Right ventricle myocardium inferior (tissue), 1 donor: ENCODE measurements at regions of chr14 and their contacts with region 1.

Region 1: GRCh38 chr14:37874429-37875191 is 279.2 kb downstream of the TTC6 start:
- DNase-seq: peak; percentile 88
- ATAC-seq: peak; percentile 80

Region 2: GRCh38 chr14:37246427-37246914 is 628.1 kb before region 1 on chr14:
- intact Hi-C with region 1: loop called (anchors 2 kb)
- DNase-seq: no peak
- ATAC-seq: no peak

Region 3: DNA sequence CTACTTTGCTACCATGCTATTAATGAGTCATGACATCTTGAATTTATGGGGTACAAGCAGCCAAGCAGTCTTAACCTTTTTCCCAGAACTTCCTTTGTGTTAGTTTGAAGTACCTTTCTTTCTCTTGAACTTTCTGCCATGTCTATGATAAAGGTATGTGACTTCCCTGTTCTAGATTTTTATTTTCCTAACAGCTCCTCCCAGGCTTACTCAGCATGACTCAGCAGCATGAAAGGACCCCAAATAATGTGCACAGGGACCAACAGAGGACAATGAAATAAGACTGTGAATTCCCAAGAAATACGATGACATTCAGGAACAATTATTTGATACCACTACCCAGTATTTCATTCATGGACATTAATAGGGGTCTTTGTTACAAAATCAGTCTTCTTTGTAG is 219.2 kb before region 1 on chr14:
- intact Hi-C with region 1: no loop called
- DNase-seq: no peak
- ATAC-seq: no peak

Region 4: GRCh38 chr14:37709419-37710195 is 165.0 kb before region 1 on chr14:
- intact Hi-C with region 1: loop called (anchors 10 kb)
- DNase-seq: no peak
- ATAC-seq: no peak